Cardiac septum (tissue), 1 donor: ENCODE measurements at regions of chr4 and their contacts with region 1.

Region 1: GRCh38 chr4:140996766-140997165 is 136.5 kb downstream of the RNF150 start:
- DNase-seq: no peak

Region 2: DNA sequence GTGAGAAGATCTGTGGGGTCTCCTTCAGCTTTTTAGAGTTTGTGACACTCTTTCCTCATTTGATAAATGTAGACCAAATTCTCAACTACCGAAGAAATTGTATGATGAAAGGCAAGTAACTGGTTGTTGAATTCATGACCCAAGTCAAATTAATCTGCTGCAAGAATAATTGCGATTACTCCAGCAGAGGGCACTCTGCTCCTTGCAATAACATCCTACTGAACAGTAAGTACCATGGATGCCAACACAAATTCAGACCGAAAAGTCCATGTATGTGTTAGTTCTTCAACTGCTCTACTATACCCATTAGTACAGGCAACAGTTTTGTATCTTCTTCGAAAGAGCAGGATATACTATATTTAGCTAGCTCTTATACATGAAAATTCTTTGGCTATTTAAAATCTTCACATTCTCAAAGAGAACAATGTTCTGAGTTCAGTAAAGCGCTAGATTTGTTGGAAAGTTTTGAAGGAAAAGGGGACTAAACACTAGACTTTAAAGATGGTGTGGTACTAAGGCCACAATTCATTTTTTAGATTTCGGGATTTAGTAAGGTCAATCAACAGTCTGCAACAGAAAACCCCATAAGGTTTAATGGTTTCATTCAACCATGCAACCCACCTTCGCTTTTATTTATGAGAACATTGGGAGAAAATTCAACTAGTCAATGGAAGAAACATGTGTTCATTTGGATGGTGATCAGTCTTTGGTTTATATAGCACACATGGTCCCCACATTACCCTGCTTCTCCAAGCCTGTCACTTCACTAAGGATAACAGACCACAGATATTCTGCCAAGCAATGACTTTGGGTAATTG is 135.2 kb before region 1 on chr4:
- intact Hi-C with region 1: loop called (anchors 5 kb)
- DNase-seq: no peak